Common myeloid progenitor, CD34-positive (primary cell): ENCODE measurements at regions of chr3 and their contacts with region 1.

Region 1: GRCh38 chr3:128804017-128804810 is 75.2 kb upstream of the ACAD9 start:
- DNase-seq: peak; percentile 82 to 94 (median 92)
- H3K4me3 ChIP-seq: peak overlapping the region in 6 of 7 experiments; percentile 36 to 72 (median 50)
- H3K27ac ChIP-seq: peak overlapping the region; percentile 51 to 73
- H3K4me1 ChIP-seq: peaks cover 27 to 58% (median 46%) of the 10 kb centered on the region in 4 experiments
- H3K27me3 ChIP-seq: no peaks in the 10 kb centered on the region

Region 2: GRCh38 chr3:128787256-128788240 is 16.7 kb before region 1 on chr3:
- CTCF ChIA-PET with region 1: interaction called, 13 read pairs
- POLR2A ChIA-PET with region 1: interaction called, 3 read pairs
- DNase-seq: peak; percentile 43 to 60 (median 58)
- H3K4me3 ChIP-seq: no peak overlapping the region
- H3K27ac ChIP-seq: no peak overlapping the region
- H3K4me1 ChIP-seq: peaks cover 17 to 70% (median 50%) of the 10 kb centered on the region in 4 experiments
- H3K27me3 ChIP-seq: no peaks in the 10 kb centered on the region

Region 3: DNA sequence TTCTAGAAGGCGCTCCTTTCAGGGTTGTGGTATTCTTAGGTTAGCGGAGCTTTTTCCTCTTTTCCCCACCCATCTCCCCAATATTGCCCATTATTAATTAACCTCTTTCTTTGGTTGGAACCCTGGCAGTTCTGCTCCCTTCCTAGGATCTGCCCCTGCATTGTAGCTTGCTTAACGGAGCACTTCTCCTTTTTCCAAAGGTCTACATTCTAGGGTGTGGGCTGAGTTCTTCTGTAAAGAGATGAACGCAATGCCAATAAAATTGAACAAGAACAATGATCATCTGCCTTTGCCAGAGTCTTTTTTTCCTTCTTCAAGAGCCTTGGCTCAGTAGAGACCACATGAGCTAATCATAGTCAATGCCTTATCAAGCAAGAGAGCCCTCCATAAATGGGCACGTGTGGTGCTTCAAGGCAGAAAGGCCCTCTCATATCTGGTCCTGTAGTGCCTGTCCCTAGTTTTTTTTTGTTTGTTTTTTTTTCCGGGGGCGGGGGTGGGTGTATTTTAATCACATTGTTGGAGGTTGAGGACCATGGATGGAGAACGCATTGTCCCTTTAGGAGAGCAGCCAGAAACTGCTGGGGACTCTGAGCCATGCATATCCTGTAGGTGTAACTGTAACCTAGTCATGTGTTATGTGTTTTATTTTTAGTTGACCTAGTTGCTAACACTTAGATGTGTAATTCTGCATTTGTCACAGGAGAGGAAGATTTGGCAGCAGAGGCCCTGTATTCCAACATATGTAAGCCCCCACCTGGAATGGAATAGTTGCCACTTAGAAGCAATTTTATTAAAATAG is 10.5 kb after region 1 on chr3:
- CTCF ChIA-PET with region 1: interaction called, 15 read pairs
- POLR2A ChIA-PET with region 1: no interaction called
- DNase-seq: no peak
- H3K4me3 ChIP-seq: no peak overlapping the region
- H3K27ac ChIP-seq: no peak overlapping the region
- H3K4me1 ChIP-seq: peaks cover 0 to 10% (median 2%) of the 10 kb centered on the region in 4 experiments
- H3K27me3 ChIP-seq: no peaks in the 10 kb centered on the region

Region 4: DNA sequence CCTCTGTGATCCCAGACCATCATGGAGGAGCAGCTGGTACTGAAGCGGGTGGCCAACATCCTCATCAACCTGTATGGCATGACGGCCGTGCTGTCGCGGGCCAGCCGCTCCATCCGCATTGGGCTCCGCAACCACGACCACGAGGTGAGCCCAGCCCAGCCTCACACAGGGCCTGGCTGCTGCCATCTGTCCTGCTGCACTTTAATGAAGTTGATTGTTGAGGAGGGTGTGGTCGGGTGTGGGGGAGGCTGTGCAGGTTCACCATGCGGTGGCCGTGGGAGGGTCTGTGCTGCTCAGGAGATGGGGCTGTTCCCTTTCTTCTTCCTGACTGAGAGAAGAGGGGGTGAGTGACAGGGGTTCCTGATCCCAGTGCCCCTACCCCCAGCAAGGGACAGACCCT is 105.8 kb after region 1 on chr3:
- CTCF ChIA-PET with region 1: no interaction called
- POLR2A ChIA-PET with region 1: no interaction called
- DNase-seq: no peak
- H3K4me3 ChIP-seq: no peak overlapping the region
- H3K27ac ChIP-seq: no peak overlapping the region
- H3K4me1 ChIP-seq: no peaks in the 10 kb centered on the region
- H3K27me3 ChIP-seq: no peaks in the 10 kb centered on the region